HepG2 (cell line): ENCODE measurements at regions of chr14 and their contacts with region 1.

Region 1: DNA sequence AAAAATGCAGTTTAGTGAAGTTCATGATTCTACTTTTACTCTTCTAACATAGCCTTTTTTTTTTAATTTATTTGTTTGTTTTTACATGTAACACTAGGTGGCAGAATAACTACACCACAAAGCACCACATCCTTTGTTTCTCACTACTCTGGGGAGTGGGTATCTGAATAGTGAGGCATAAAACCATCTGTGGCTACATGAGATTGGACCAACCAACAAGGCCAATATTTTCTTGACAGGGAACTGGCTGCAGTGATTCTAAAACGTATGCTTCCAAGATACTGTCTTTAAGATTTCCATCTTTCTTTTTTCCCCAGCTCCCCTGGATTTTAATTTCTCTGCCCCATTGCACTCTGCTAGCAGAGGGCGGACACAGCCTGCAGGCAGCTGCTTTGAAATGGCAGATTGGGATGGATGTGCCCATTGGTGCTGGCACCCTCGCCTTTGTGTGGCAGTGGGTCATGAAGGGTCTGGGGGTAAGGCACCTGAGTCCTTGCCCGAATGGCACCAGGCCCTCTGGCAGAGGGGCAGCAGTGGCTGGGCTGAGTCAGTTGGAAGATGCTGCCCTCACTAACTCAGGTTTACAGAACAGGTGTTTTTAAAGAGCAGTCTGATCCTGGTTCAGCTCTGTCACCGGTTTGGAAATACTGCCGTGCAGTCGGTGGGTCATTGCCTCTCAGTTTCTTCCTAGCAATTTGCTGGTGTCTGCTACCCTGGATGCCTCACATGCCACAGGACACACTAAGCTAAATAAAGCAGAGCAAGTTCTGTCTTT is 429.1 kb downstream of the RAD51B start:
- DNase-seq: peak; percentile 54
- ATAC-seq: peak; percentile 61
- H3K4me3 ChIP-seq: no peak overlapping the region
- H3K27ac ChIP-seq: no peak overlapping the region
- H3K4me1 ChIP-seq: peaks cover 65% of the 10 kb centered on the region
- H3K27me3 ChIP-seq: no peaks in the 10 kb centered on the region
- CTCF ChIP-seq: peak; percentile 69
- EP300 ChIP-seq: no peak
- POLR2A ChIP-seq: no peak
- RAD21 ChIP-seq: peak; percentile 62; the same call in 1 of the 2 replicates

Region 2: GRCh38 chr14:68297876-68298469 is 49.3 kb after region 1 on chr14:
- CTCF ChIA-PET with region 1: no interaction called
- POLR2A ChIA-PET with region 1: interaction called, 3 read pairs
- in situ Hi-C with region 1: no loop called
- intact Hi-C with region 1: loop called (anchors 5 kb)
- DNase-seq: peak; percentile 49
- ATAC-seq: no peak
- H3K4me3 ChIP-seq: no peak overlapping the region
- H3K27ac ChIP-seq: no peak overlapping the region
- H3K4me1 ChIP-seq: peaks cover 58% of the 10 kb centered on the region
- H3K27me3 ChIP-seq: no peaks in the 10 kb centered on the region
- CTCF ChIP-seq: peak; percentile 69
- EP300 ChIP-seq: no peak
- POLR2A ChIP-seq: no peak
- RAD21 ChIP-seq: peak; percentile 41

Region 3: GRCh38 chr14:68621400-68622365 is 373.0 kb after region 1 on chr14:
- CTCF ChIA-PET with region 1: no interaction called
- POLR2A ChIA-PET with region 1: no interaction called
- in situ Hi-C with region 1: no loop called
- intact Hi-C with region 1: loop called (anchors 5 kb)
- DNase-seq: no peak
- ATAC-seq: no peak
- H3K4me3 ChIP-seq: no peak overlapping the region
- H3K27ac ChIP-seq: no peak overlapping the region
- H3K4me1 ChIP-seq: peaks cover 53% of the 10 kb centered on the region
- H3K27me3 ChIP-seq: no peaks in the 10 kb centered on the region
- CTCF ChIP-seq: no peak
- EP300 ChIP-seq: no peak
- POLR2A ChIP-seq: no peak
- RAD21 ChIP-seq: no peak

Region 4: GRCh38 chr14:68718023-68718995 is 469.6 kb after region 1 on chr14:
- CTCF ChIA-PET with region 1: no interaction called
- POLR2A ChIA-PET with region 1: no interaction called
- in situ Hi-C with region 1: no loop called
- intact Hi-C with region 1: loop called (anchors 1 kb)
- DNase-seq: no peak
- ATAC-seq: peak; percentile 54
- H3K4me3 ChIP-seq: no peak overlapping the region
- H3K27ac ChIP-seq: no peak overlapping the region
- H3K4me1 ChIP-seq: peaks cover 65% of the 10 kb centered on the region
- H3K27me3 ChIP-seq: no peaks in the 10 kb centered on the region
- CTCF ChIP-seq: no peak
- EP300 ChIP-seq: no peak
- POLR2A ChIP-seq: no peak
- RAD21 ChIP-seq: 0 out of 2 replicates have a peak, but pooled peaks have one; percentile 19